Heart left ventricle (tissue), 16 donors: ENCODE measurements at regions of chr5 and their contacts with region 1.

Region 1: DNA sequence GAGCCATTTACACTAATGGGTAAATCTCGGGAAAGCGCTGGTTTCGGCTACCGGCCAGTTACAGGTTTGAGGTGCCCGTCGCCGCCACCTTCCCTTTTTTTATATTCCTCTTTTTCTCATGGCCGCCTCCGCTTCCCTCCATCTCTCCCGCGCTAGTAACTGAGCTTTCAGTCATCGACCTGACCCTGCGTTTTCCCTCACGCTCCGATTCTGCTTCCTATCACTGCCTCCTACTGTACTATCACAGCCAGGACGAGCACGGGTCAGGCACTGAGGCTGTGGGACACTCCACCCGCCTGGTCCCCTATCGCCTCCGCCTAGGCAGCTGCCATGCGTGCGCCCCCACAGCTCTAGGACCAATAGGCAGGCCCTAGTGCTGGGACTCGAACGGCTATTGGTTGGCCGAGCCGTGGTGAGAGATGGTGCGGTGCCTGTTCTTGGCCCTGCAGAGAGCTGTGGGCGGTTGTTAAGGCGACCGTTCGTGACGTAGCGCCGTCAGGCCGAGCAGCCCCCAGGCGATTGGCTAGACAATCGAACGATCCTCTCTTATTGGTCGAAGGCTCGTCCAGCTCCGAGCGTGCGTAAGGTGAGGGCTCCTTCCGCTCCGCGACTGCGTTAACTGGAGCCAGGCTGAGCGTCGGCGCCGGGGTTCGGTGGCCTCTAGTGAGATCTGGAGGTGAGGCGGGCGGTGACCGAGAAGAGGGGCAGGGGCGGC is at the start of gene HMGCR:
- DNase-seq: peak; percentile 99 to 100 (median 99)
- ATAC-seq: peak; percentile 99 to 100 (median 100)
- H3K4me3 ChIP-seq: peak within 1 kb of the TSS; percentile 75 to 99 (median 89)
- H3K27ac ChIP-seq: peak within 1 kb of the TSS; percentile 54 to 98 (median 88)
- H3K4me1 ChIP-seq: peaks cover 0 to 28% (median 14%) of the 10 kb centered on the region in 12 donors
- H3K27me3 ChIP-seq: no peaks in the 10 kb centered on the region
- CTCF ChIP-seq: peak in 5 of 12 donors; percentile 19 to 55 (median 35)
- POLR2A ChIP-seq: peak in 1 of 2 donors; percentile 69
- total RNA-seq, gene HMGCR: 6.0 to 15.2 (median 11.9) TPM

Region 2: GRCh38 chr5:75717082-75717922 is 380.5 kb after region 1 on chr5 and contains the start of gene POC5:
- intact Hi-C with region 1: loop called in 1 of 10 experiments (anchors 2 kb)
- DNase-seq: peak; percentile 95 to 97 (median 96)
- ATAC-seq: peak; percentile 99 to 100 (median 100)
- H3K4me3 ChIP-seq: peak within 1 kb of the TSS; percentile 61 to 96 (median 84)
- H3K27ac ChIP-seq: peak within 1 kb of the TSS; percentile 29 to 95 (median 84)
- H3K4me1 ChIP-seq: peaks cover 0 to 15% (median 10%) of the 10 kb centered on the region in 12 donors
- H3K27me3 ChIP-seq: no peaks in the 10 kb centered on the region
- CTCF ChIP-seq: no peak
- POLR2A ChIP-seq: peak in 1 of 2 donors; percentile 68
- total RNA-seq, gene POC5: 3.4 to 6.7 (median 4.8) TPM